ENCODE measurements at regions of chr6 and their contacts with region 1.

Region 1: DNA sequence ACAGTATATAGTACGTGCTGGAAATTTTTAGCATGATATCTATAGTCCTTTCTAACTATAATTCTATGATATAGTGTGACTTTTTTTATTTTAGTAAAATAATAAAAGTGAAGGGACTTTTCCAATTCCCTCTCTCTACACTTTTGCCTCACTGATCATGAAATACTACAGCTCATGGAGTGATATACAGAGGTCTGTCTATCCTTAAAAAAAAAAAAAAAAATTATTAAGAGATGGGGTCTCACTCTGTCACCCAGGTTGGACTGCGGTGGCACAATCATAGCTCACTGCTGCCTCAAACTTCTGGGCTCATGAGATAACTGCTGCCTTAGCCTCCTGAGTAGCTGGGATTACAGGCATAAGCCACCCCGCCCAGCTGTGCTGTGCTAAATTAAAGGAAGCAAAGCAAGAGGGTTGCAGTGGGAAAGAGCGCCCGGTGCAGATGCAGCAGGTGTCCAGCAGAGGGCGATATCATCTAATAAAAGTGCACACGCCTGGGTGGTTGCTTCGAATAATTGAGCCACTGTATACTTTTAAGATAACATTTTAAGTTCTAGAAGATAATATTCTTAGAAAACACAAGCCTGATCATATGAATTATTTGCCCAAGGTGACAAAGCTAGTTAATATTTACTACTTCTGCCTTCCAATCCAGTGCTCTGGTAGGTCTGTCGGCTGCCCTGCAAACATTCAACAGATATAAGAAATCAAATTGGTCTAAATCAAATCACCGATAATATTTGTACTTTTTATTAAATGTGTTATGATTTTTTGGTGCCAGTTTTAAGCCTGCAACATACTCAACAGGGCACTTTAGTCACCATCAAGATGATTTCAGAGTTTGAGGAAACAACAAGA is 94.9 kb upstream of the NT5E start:
- DNase-seq: peak; percentile 28 to 79 (median 63)
- H3K4me3 ChIP-seq: no peak overlapping the region
- H3K27ac ChIP-seq: no peak overlapping the region
- H3K27me3 ChIP-seq: peaks cover 0 to 7% (median 0%) of the 10 kb centered on the region in 45 donors
- CTCF ChIP-seq: peak; percentile 60 to 99 (median 94)

Region 2: DNA sequence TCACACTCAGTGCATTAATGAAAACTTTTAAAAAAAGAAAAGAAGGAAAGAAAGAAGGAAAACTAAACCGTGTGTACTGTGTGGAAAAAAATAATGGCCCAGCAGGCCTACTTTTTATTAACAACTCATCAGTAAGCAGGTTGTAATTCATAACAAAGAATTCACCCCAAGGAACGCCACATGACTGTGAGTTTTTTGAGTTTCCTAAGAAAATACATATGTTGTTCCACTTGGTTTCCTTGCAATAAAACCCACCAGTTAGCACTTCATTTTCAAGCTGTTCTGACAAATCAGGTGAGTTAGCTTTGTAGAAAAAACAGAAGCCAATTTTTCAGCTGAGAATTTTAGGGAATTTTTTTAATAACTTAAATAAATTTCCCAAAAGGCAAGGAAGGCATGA is 331.3 kb before region 1 on chr6:
- intact Hi-C with region 1: no loop called
- DNase-seq: no peak
- H3K4me3 ChIP-seq: no peak overlapping the region
- H3K27ac ChIP-seq: no peak overlapping the region
- H3K27me3 ChIP-seq: no peaks in the 10 kb centered on the region
- CTCF ChIP-seq: no peak

Region 3: GRCh38 chr6:85482905-85483700 is 128.1 kb after region 1 on chr6:
- intact Hi-C with region 1: loop called (anchors 2 kb)
- DNase-seq: peak; percentile 27 to 86 (median 78)
- H3K4me3 ChIP-seq: peak overlapping the region in 2 of 59 donors; percentile 7 to 10
- H3K27ac ChIP-seq: no peak overlapping the region
- H3K27me3 ChIP-seq: peaks cover 0 to 4% (median 0%) of the 10 kb centered on the region in 45 donors
- CTCF ChIP-seq: peak; percentile 95 to 100 (median 99)

Region 4: DNA sequence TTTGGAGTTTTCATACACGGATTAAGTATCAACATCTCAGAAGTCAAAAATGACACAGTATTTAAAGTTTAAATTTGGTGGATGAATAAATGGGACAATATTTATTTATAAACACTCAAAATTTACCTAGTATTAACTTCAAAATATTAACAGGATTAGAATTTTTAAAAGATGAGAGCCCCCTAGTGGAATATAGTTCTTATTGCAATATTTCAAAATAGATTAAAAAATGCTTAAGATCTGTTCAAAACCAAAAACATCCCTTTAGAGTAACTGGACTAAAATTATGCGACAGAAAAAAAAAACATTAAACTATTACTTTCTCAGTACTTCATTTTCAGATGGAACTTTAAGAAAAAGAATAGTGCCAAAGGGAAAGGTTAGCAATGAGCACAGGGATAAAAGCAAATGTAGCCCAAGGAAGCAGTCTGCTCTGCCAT is 182.1 kb after region 1 on chr6:
- intact Hi-C with region 1: loop called in 1 of 2 experiments (anchors 5 kb)
- DNase-seq: no peak
- H3K4me3 ChIP-seq: no peak overlapping the region
- H3K27ac ChIP-seq: no peak overlapping the region
- H3K27me3 ChIP-seq: no peaks in the 10 kb centered on the region
- CTCF ChIP-seq: peak; percentile 50 to 92 (median 68)

Measured in dorsolateral prefrontal cortex (tissue), 120 donors.